ENCODE measurements at regions of chr11 and their contacts with region 1.

Region 1: GRCh38 chr11:126355324-126355925 is at the start of gene ST3GAL4:
- DNase-seq: peak; percentile 8 to 83 (median 36)
- ATAC-seq: peak; percentile 77
- H3K4me3 ChIP-seq: peak within 1 kb of the TSS; percentile 74
- H3K4me3 Mint-ChIP-seq: peak within 1 kb of the TSS; percentile 77 to 95 (median 88)
- H3K27ac ChIP-seq: peak within 1 kb of the TSS; percentile 51
- H3K27ac Mint-ChIP-seq: peak within 1 kb of the TSS in 8 of 9 donors; percentile 19 to 91 (median 62)
- H3K4me1 ChIP-seq: peaks cover 8 to 14% of the 10 kb centered on the region in 2 donors
- H3K4me1 Mint-ChIP-seq: peaks cover 21 to 46% (median 29%) of the 10 kb centered on the region in 7 donors
- H3K27me3 ChIP-seq: no peaks in the 10 kb centered on the region
- H3K27me3 Mint-ChIP-seq: no peaks in the 10 kb centered on the region
- total RNA-seq, gene ST3GAL4: 2.7 to 13.4 (median 4.7) TPM

Region 2: DNA sequence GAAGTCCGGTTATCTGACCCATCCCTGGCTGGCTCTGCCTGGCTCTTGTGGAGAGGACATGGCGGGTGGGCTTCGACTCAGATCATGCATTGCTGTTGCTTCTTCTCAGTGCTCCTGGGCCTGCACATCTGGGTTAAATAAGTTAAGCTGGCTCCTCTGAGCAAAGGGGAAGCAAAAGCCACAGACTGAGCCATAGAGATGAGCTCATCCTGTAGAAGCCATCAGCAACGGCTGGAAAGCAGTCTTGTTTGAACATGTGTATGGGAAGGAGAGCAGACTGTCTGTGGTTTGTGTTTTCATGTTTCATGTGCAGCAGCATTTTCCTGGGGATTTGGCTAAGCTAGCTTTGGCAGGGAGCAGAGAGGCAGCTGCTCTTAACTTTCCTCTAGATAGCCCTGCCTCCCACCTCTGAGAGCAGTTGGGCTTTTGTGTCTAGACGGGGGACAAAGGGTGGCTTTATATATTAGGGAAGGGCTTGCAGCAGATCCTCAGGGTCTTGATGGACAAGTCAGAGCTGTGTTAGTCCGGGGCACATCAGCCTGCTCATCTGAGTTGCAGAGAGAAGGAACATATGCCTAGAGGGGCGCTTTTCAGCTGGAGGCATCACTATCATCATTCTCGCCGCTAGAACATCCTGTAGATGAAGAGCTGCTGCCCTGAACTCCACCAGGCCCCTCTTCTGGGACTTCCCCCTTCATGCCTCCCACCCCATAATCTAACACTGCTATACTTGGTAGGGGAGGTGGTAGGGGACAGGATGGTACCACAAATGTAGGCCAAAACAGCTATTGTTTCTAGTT is 36.7 kb before region 1 on chr11:
- CTCF ChIA-PET with region 1: no interaction called
- POLR2A ChIA-PET with region 1: no interaction called
- intact Hi-C with region 1: loop called in 1 of 2 experiments (anchors 1 kb)
- DNase-seq: peak in 2 of 9 donors; percentile 21 to 27
- ATAC-seq: peak; percentile 79
- H3K4me3 ChIP-seq: peak overlapping the region; percentile 38
- H3K4me3 Mint-ChIP-seq: peak overlapping the region; percentile 55 to 77 (median 62)
- H3K27ac ChIP-seq: peak overlapping the region; percentile 62
- H3K27ac Mint-ChIP-seq: peak overlapping the region; percentile 7 to 92 (median 87)
- H3K4me1 ChIP-seq: peaks cover 24 to 25% of the 10 kb centered on the region in 2 donors
- H3K4me1 Mint-ChIP-seq: peaks cover 39 to 50% (median 42%) of the 10 kb centered on the region in 7 donors
- H3K27me3 ChIP-seq: no peaks in the 10 kb centered on the region
- H3K27me3 Mint-ChIP-seq: no peaks in the 10 kb centered on the region

Region 3: GRCh38 chr11:126573325-126574076 is 218.1 kb after region 1 on chr11:
- CTCF ChIA-PET with region 1: no interaction called
- POLR2A ChIA-PET with region 1: no interaction called
- intact Hi-C with region 1: no loop called
- DNase-seq: no peak
- ATAC-seq: no peak
- H3K4me3 ChIP-seq: no peak overlapping the region
- H3K4me3 Mint-ChIP-seq: no peak overlapping the region
- H3K27ac ChIP-seq: no peak overlapping the region
- H3K27ac Mint-ChIP-seq: no peak overlapping the region
- H3K4me1 ChIP-seq: no peaks in the 10 kb centered on the region
- H3K4me1 Mint-ChIP-seq: no peaks in the 10 kb centered on the region
- H3K27me3 ChIP-seq: peaks cover 0 to 8% of the 10 kb centered on the region in 2 donors
- H3K27me3 Mint-ChIP-seq: peaks cover 0 to 36% (median 3%) of the 10 kb centered on the region in 5 donors